ENCODE measurements at regions of chr17 and their contacts with region 1.

Region 1: GRCh38 chr17:51908840-51909537 is 249.5 kb downstream of the CA10 start:
- DNase-seq: no peak
- H3K4me3 ChIP-seq: no peak overlapping the region
- H3K4me3 Mint-ChIP-seq: no peak overlapping the region
- H3K27ac Mint-ChIP-seq: no peak overlapping the region
- H3K4me1 ChIP-seq: no peaks in the 10 kb centered on the region
- H3K4me1 Mint-ChIP-seq: no peaks in the 10 kb centered on the region
- H3K27me3 ChIP-seq: no peaks in the 10 kb centered on the region
- H3K27me3 Mint-ChIP-seq: peaks cover 6% of the 10 kb centered on the region
- CTCF ChIP-seq: no peak

Region 2: GRCh38 chr17:51890710-51891109 is 18.3 kb before region 1 on chr17:
- CTCF ChIA-PET with region 1: no interaction called
- POLR2A ChIA-PET with region 1: no interaction called
- intact Hi-C with region 1: loop called (anchors 1 kb)
- DNase-seq: no peak
- H3K4me3 ChIP-seq: no peak overlapping the region
- H3K4me3 Mint-ChIP-seq: no peak overlapping the region
- H3K27ac Mint-ChIP-seq: no peak overlapping the region
- H3K4me1 ChIP-seq: no peaks in the 10 kb centered on the region
- H3K4me1 Mint-ChIP-seq: no peaks in the 10 kb centered on the region
- H3K27me3 ChIP-seq: no peaks in the 10 kb centered on the region
- H3K27me3 Mint-ChIP-seq: peaks cover 8% of the 10 kb centered on the region
- CTCF ChIP-seq: no peak

Region 3: GRCh38 chr17:52011070-52011469 is 102.1 kb after region 1 on chr17:
- CTCF ChIA-PET with region 1: interaction called, 10 read pairs
- POLR2A ChIA-PET with region 1: no interaction called
- intact Hi-C with region 1: no loop called
- DNase-seq: no peak
- H3K4me3 ChIP-seq: no peak overlapping the region
- H3K4me3 Mint-ChIP-seq: no peak overlapping the region
- H3K27ac Mint-ChIP-seq: no peak overlapping the region
- H3K4me1 ChIP-seq: no peaks in the 10 kb centered on the region
- H3K4me1 Mint-ChIP-seq: no peaks in the 10 kb centered on the region
- H3K27me3 ChIP-seq: no peaks in the 10 kb centered on the region
- H3K27me3 Mint-ChIP-seq: peaks cover 5% of the 10 kb centered on the region
- CTCF ChIP-seq: no peak

Region 4: GRCh38 chr17:52255347-52255746 is 346.4 kb after region 1 on chr17:
- CTCF ChIA-PET with region 1: no interaction called
- POLR2A ChIA-PET with region 1: no interaction called
- intact Hi-C with region 1: no loop called
- DNase-seq: no peak
- H3K4me3 ChIP-seq: no peak overlapping the region
- H3K4me3 Mint-ChIP-seq: no peak overlapping the region
- H3K27ac Mint-ChIP-seq: no peak overlapping the region
- H3K4me1 ChIP-seq: no peaks in the 10 kb centered on the region
- H3K4me1 Mint-ChIP-seq: no peaks in the 10 kb centered on the region
- H3K27me3 ChIP-seq: no peaks in the 10 kb centered on the region
- H3K27me3 Mint-ChIP-seq: no peaks in the 10 kb centered on the region
- CTCF ChIP-seq: no peak

Measured in Caco-2 (cell line).